CD4-positive, alpha-beta memory T cell (primary cell): ENCODE measurements at regions of chr1 and their contacts with region 1.

Region 1: DNA sequence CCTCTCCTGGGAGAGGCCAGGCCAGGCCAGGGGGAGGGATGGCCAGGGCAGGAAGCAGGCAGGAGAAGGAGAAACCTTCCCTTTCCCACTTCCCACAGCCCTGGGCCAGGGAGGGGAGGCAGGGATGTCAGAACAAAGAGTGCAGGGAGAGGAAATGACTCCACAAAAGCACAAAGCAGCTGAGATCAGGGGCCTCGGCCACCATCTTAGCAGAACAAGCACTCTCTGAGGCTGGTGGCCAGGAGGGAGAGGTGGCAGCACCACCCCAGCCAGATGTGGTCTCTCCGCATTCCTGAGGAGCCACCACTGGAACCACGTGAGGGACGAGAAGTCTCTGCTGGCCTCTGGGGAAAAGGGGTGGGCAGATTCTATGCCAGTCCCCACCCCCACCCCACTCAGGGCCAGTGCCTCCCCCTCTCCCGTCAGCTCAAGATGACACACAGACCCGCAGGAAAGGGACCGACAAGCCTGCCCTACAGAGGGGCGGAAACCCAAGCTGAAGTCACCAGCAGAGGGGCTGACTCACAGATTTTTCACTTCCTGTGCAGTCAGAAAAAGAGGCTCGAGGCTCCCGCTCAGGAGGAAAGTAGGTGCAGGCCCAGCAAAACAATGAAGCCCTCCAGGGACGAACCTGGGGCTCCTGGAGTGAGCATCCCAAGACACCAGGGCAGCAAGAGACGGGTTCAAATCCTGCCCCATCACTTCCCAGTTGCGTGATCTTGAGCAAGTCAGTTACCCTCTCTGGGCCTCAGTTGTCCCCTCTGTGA is 24.1 kb upstream of the ALDH4A1 start:
- DNase-seq: peak; percentile 75 to 95 (median 78)
- H3K4me3 ChIP-seq: peak overlapping the region; percentile 45 to 58
- H3K4me3 Mint-ChIP-seq: peak overlapping the region; percentile 78 to 89 (median 84)
- H3K27ac ChIP-seq: peak overlapping the region; percentile 75
- H3K27ac Mint-ChIP-seq: peak overlapping the region; percentile 87 to 99 (median 98)
- H3K4me1 ChIP-seq: peaks cover 99% of the 10 kb centered on the region
- H3K4me1 Mint-ChIP-seq: peaks cover 48 to 98% (median 83%) of the 10 kb centered on the region in 4 donors
- H3K27me3 ChIP-seq: no peaks in the 10 kb centered on the region
- H3K27me3 Mint-ChIP-seq: no peaks in the 10 kb centered on the region

Region 2: GRCh38 chr1:18941221-18942141 is 15.0 kb after region 1 on chr1:
- CTCF ChIA-PET with region 1: interaction called, 16 read pairs
- POLR2A ChIA-PET with region 1: interaction called, 599 read pairs
- intact Hi-C with region 1: no loop called
- DNase-seq: no peak
- H3K4me3 ChIP-seq: no peak overlapping the region
- H3K4me3 Mint-ChIP-seq: no peak overlapping the region
- H3K27ac ChIP-seq: peak overlapping the region; percentile 0
- H3K27ac Mint-ChIP-seq: peak overlapping the region; percentile 46 to 94 (median 70)
- H3K4me1 ChIP-seq: peaks cover 96% of the 10 kb centered on the region
- H3K4me1 Mint-ChIP-seq: peaks cover 49 to 93% (median 78%) of the 10 kb centered on the region in 4 donors
- H3K27me3 ChIP-seq: no peaks in the 10 kb centered on the region
- H3K27me3 Mint-ChIP-seq: no peaks in the 10 kb centered on the region

Region 3: GRCh38 chr1:18949686-18950400 is 23.3 kb after region 1 on chr1:
- CTCF ChIA-PET with region 1: interaction called, 143 read pairs
- POLR2A ChIA-PET with region 1: interaction called, 599 read pairs
- intact Hi-C with region 1: loop called (anchors 1 kb)
- DNase-seq: no peak
- H3K4me3 ChIP-seq: peak overlapping the region; percentile 59 to 65
- H3K4me3 Mint-ChIP-seq: peak overlapping the region; percentile 91 to 98 (median 94)
- H3K27ac ChIP-seq: peak overlapping the region; percentile 98
- H3K27ac Mint-ChIP-seq: peak overlapping the region; percentile 98 to 100 (median 100)
- H3K4me1 ChIP-seq: peaks cover 100% of the 10 kb centered on the region
- H3K4me1 Mint-ChIP-seq: peaks cover 66 to 98% (median 87%) of the 10 kb centered on the region in 4 donors
- H3K27me3 ChIP-seq: no peaks in the 10 kb centered on the region
- H3K27me3 Mint-ChIP-seq: no peaks in the 10 kb centered on the region

Region 4: DNA sequence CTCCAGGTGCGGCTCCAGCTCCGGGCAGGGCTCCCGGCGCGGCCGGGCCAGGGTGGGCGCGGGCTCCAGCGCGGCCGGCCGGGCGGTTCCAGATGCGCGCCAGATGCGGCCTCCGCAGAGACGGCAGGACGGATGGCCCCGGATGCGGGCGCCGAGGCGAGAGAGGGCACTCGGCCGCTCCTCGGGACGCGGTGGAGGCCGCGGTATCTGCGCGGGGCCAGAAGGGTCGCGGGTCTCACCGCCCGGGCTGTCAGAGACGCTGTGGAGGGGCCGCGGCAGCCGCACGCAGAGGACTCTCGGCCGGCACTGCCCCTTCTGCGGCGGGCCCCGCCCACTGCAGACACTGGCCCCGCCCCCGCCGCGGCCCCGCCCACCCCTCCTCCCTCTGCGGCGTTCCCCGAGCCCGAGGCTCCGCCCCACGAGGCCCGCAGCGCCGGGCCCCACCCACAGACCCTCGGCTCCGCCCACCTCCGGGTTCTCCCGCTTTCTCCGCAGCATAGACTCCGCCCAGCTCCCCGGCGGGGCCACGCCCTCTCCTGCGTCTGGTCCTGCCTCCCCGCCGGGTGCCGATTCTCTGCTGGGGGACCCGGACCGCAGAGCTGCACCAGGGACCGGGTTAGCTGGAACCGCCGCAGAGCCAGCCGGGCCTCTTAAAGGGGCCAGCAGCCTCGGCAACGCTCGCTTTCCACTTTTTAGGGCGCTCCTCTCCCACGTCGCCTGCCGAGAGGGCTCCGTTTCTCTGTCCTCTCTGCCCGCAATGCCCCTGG is 30.1 kb after region 1 on chr1 and contains the start of gene IFFO2:
- CTCF ChIA-PET with region 1: interaction called, 143 read pairs
- POLR2A ChIA-PET with region 1: interaction called, 599 read pairs
- intact Hi-C with region 1: loop called (anchors 1 kb)
- DNase-seq: peak; percentile 96 to 99 (median 97)
- H3K4me3 ChIP-seq: peak within 1 kb of the TSS in 1 of 2 donors; percentile 74
- H3K4me3 Mint-ChIP-seq: peak within 1 kb of the TSS; percentile 93 to 98 (median 94)
- H3K27ac ChIP-seq: peak within 1 kb of the TSS; percentile 98
- H3K27ac Mint-ChIP-seq: peak within 1 kb of the TSS; percentile 79 to 100 (median 99)
- H3K4me1 ChIP-seq: peaks cover 55% of the 10 kb centered on the region
- H3K4me1 Mint-ChIP-seq: peaks cover 31 to 66% (median 47%) of the 10 kb centered on the region in 4 donors
- H3K27me3 ChIP-seq: no peaks in the 10 kb centered on the region
- H3K27me3 Mint-ChIP-seq: no peaks in the 10 kb centered on the region
- total RNA-seq, gene IFFO2: 39.0 to 41.3 TPM